Gastrocnemius medialis (tissue), 4 donors: ENCODE measurements at regions of chr17 and their contacts with region 1.

Region 1: DNA sequence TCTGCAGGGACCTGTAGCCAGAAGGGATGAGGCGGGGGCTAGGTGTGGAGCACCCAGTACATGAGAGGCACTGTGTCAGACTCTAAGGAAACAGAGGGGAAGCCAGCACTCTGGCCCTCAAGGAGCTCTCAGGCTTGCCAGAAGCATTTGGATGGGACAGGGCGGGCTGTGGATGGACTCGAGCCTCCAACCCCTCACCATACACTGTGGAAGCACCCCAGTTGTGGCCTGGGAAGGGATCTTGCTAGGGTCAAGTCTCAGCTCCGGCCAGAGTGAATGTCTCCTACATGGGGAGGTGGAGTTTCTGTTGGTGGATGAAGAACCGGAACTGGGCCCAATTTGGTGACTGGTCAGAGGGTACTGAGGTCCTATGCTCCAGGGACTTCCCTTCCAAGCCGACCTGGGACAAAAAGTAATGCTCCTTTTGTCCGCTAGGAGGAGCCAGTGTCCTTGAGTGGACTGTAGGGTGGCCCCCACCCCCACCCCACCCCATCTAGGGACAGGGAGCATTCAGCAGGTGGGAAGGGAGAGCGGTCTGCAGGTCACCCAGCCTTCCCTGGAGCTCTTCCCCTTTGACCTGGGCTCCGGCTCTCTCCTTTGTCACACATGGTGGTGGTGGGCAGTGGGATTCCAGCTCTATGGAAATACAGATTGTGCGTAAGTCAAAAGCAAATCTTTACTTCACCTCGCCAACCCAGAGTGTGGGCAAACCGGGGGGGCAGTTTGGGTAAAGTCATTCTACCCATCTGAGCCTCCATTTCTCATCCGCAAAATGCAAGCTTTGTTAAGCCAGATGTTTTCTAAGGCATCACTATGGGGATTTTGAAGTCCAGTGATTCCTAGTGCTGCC is 20.4 kb upstream of the PHB1 start:
- DNase-seq: peak in 1 of 2 donors; percentile 31
- ATAC-seq: peak; percentile 68 to 78
- H3K4me3 ChIP-seq: no peak overlapping the region
- H3K27ac ChIP-seq: no peak overlapping the region
- H3K4me1 ChIP-seq: no peaks in the 10 kb centered on the region
- H3K27me3 ChIP-seq: peaks cover 4 to 12% (median 10%) of the 10 kb centered on the region in 3 donors
- CTCF ChIP-seq: peak in 4 of 5 experiments; percentile 63 to 79 (median 68)
- POLR2A ChIP-seq: no peak

Region 2: GRCh38 chr17:49496183-49496866 is 61.3 kb after region 1 on chr17:
- in situ Hi-C with region 1: no loop called
- intact Hi-C with region 1: loop called (anchors 5 kb)
- DNase-seq: peak; percentile 29 to 48
- ATAC-seq: peak; percentile 70 to 83
- H3K4me3 ChIP-seq: peak overlapping the region; percentile 49 to 67 (median 57)
- H3K27ac ChIP-seq: no peak overlapping the region
- H3K4me1 ChIP-seq: peaks cover 19 to 26% of the 10 kb centered on the region in 2 donors
- H3K27me3 ChIP-seq: peaks cover 34 to 47% (median 38%) of the 10 kb centered on the region in 3 donors
- CTCF ChIP-seq: peak; percentile 75 to 97 (median 92)
- POLR2A ChIP-seq: no peak

Region 3: GRCh38 chr17:49548506-49549310 is 113.7 kb after region 1 on chr17:
- in situ Hi-C with region 1: loop called in 3 of 4 experiments (anchors 10 kb)
- intact Hi-C with region 1: loop called (anchors 1 kb)
- DNase-seq: no peak
- ATAC-seq: peak in 1 of 2 donors; percentile 51
- H3K4me3 ChIP-seq: no peak overlapping the region
- H3K27ac ChIP-seq: no peak overlapping the region
- H3K4me1 ChIP-seq: no peaks in the 10 kb centered on the region
- H3K27me3 ChIP-seq: no peaks in the 10 kb centered on the region
- CTCF ChIP-seq: peak; percentile 40 to 67 (median 56)
- POLR2A ChIP-seq: no peak

Region 4: GRCh38 chr17:49556223-49556971 is 121.4 kb after region 1 on chr17:
- in situ Hi-C with region 1: loop called in 3 of 4 experiments (anchors 10 kb)
- intact Hi-C with region 1: no loop called
- DNase-seq: peak in 1 of 2 donors; percentile 58
- ATAC-seq: peak; percentile 76 to 81
- H3K4me3 ChIP-seq: no peak overlapping the region
- H3K27ac ChIP-seq: no peak overlapping the region
- H3K4me1 ChIP-seq: peaks cover 5 to 6% of the 10 kb centered on the region in 2 donors
- H3K27me3 ChIP-seq: no peaks in the 10 kb centered on the region
- CTCF ChIP-seq: peak; percentile 80 to 98 (median 96)
- POLR2A ChIP-seq: no peak